ENCODE measurements at regions of chr3 and their contacts with region 1.

Region 1: DNA sequence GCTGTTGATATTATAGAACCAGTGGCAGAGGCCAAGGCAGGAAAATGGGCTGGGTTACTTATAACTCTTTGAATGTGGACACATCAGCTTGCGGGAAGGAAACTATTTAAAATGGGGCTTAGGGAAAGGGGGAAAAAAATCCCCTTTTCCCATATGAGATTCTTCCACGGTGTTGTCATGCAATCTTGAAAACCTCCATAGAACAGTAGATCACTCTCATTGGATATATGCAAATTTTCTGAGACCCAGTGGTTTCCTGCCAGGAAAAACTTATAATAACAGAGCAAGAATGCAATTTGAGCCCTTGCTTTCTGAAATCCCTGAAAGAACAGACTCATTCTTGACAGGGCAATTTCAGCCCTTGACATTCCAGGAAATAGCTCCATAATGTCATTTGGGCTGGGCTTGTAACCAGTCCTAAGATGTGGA is 31.1 kb downstream of the TMEM212 start:
- DNase-seq: no peak
- H3K4me3 Mint-ChIP-seq: no peak overlapping the region
- H3K27ac Mint-ChIP-seq: no peak overlapping the region
- H3K4me1 Mint-ChIP-seq: peaks cover 24% of the 10 kb centered on the region
- H3K27me3 Mint-ChIP-seq: peaks cover 20% of the 10 kb centered on the region

Region 2: GRCh38 chr3:171788546-171789351 is 85.5 kb before region 1 on chr3:
- intact Hi-C with region 1: no loop called
- DNase-seq: no peak
- H3K4me3 Mint-ChIP-seq: no peak overlapping the region
- H3K27ac Mint-ChIP-seq: no peak overlapping the region
- H3K4me1 Mint-ChIP-seq: no peaks in the 10 kb centered on the region
- H3K27me3 Mint-ChIP-seq: peaks cover 26% of the 10 kb centered on the region

Region 3: DNA sequence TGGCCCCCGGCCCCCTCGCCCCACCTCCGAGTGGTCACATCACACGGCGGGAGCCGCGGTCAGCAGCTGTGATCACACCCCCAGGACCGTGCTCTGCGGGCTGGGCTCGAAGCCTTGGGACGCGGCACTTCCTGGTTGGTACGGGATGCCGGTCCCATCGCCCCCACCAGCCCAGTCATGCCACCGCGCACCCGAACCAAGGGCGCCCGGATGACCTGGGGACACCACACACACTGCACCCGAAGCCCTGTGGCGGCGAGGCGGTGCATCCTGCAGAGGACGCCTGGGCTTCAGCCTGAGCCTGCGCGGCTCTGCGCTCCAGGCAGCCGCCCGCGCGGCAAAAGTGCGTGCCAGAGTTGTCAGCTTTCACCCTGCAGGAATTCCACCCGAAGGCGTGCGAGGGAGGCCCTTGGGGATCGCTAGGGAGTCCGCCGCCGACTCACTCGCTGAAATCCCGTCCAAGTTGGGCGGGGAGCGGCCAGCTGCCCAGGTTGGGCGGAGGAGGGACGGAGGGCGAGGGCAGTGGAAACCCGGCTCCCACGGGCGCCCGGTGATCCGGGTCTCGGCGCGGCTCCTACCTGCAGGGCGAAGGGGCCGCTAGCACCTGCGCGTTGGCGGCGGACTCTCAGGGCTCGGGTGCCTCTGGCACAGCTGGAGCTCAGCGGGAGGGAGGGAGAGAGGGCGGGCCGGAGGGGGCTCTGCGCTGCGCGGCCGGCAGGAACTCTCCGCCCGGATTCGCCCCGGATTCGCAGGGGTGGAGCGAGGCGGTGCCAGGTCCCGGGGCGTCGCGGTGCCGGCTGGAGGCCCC is 64.2 kb before region 1 on chr3 and contains the start of gene PLD1:
- intact Hi-C with region 1: loop called (anchors 5 kb)
- DNase-seq: peak; percentile 51
- H3K4me3 Mint-ChIP-seq: peak within 1 kb of the TSS; percentile 77
- H3K27ac Mint-ChIP-seq: peak within 1 kb of the TSS; percentile 47
- H3K4me1 Mint-ChIP-seq: peaks cover 43% of the 10 kb centered on the region
- H3K27me3 Mint-ChIP-seq: peaks cover 24% of the 10 kb centered on the region
- total RNA-seq, gene PLD1: 1.0 and 1.1 TPM in 2 replicates

Region 4: GRCh38 chr3:171846597-171846996 is 27.7 kb before region 1 on chr3:
- intact Hi-C with region 1: loop called (anchors 2 kb)
- DNase-seq: no peak
- H3K4me3 Mint-ChIP-seq: peak overlapping the region; percentile 47
- H3K27ac Mint-ChIP-seq: peak overlapping the region; percentile 84
- H3K4me1 Mint-ChIP-seq: peaks cover 24% of the 10 kb centered on the region
- H3K27me3 Mint-ChIP-seq: peaks cover 12% of the 10 kb centered on the region

Region 5: GRCh38 chr3:172194702-172195406 is 320.6 kb after region 1 on chr3:
- intact Hi-C with region 1: no loop called
- DNase-seq: no peak
- H3K4me3 Mint-ChIP-seq: no peak overlapping the region
- H3K27ac Mint-ChIP-seq: no peak overlapping the region
- H3K4me1 Mint-ChIP-seq: peaks cover 1% of the 10 kb centered on the region
- H3K27me3 Mint-ChIP-seq: no peaks in the 10 kb centered on the region

Measured in activated T-helper 2 cell treated with anti-CD3 and anti-CD28 coated beads, Interferon-gamma antibody, Interleukin-2, Interleukin-4, amounts not matched to agents 10 μg/mL and 5 μg/mL and 100 μg/mL, durations not matched to agents 14 hours and 24 hours and 36 hours (primary cell).